ENCODE measurements at regions of chr3 and their contacts with region 1.

Region 1: DNA sequence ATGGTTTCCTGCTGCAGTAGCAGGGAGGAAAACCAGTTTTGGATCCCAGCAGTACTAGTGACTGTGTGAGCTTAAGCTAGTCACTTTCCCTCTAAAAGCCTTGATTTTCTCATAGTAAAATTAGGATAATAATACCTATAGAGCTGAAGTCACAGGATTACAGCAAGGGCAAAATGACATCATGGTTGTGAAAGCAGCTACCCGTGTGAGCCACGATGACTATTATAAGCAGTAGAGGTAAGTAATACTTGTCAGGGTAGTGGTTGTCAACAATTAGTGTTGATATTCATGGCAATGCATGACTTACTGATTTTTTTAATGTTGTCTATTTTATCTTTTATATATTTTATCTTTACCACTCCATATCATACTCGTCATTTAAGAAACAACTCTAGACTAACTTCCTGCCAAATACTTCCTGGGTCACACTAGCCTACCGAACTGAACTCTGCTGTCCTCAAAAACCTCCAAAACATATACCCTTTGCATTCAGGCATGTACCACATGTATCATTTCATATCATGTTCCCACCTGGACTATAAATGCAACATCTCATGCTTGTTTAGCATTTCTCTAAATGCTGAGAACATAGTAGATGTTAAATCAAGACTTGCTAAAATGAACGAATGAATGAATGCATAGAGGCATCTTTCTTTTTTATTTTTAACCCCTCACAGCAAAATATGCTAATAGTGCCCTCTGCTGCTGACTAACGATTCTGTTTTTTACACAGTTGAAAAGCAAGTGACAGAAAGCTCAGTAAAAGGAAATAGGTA is 172.6 kb downstream of the P3H2 start:
- DNase-seq: no peak
- H3K4me3 ChIP-seq: no peak overlapping the region
- H3K27ac ChIP-seq: no peak overlapping the region
- H3K4me1 ChIP-seq: no peaks in the 10 kb centered on the region
- H3K27me3 ChIP-seq: no peaks in the 10 kb centered on the region
- CTCF ChIP-seq: peak; percentile 21 to 77 (median 53)
- POLR2A ChIP-seq: no peak

Region 2: GRCh38 chr3:189270248-189270832 is 677.8 kb before region 1 on chr3:
- intact Hi-C with region 1: loop called (anchors 5 kb)
- DNase-seq: peak; percentile 68
- H3K4me3 ChIP-seq: no peak overlapping the region
- H3K27ac ChIP-seq: no peak overlapping the region
- H3K4me1 ChIP-seq: no peaks in the 10 kb centered on the region
- H3K27me3 ChIP-seq: no peaks in the 10 kb centered on the region
- CTCF ChIP-seq: peak in 2 of 4 experiments; percentile 71 to 74
- POLR2A ChIP-seq: no peak

Measured in prostate gland (tissue), 2 donors.